ACHN (cell line): ENCODE measurements at regions of chr1 and their contacts with region 1.

Region 1: DNA sequence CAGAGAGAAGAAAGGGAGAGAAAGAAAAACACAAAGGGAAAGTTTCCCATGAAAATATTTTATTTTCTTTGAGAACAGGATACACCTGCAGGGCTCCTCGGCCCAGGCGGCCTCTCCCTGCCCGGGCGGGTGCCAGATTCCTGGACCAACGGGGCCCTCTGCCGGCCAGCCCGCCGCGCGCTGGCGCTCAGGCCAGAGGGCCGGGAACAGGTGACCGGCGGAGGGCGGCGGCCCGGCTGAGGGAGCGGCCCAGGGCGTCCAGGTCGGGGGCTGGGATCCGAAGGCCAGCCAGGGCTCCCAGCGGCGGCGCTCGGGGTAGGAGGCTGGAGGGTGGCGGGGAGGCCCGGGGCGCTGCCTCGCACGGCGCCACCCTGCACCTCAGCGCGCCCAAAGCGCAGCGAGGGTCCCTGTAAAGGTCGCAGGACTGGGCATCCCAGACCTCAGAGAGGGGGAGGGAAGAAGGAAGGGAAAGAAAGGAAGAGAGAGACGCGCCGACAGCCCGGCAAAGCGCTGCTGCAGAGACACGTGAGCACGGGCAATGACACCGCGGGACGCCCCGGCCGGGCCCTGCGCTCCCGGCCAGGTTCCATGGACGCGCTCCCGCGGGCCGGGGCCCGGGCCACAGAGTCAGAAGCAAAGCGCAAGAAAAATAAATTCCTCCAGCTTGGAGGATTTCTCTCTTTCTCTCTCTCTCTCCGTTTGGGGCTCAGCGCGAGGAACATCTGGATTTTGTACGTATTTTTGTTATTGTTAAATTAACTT is 927 bp downstream of the WNT9A start:
- DNase-seq: peak; percentile 81

Region 2: DNA sequence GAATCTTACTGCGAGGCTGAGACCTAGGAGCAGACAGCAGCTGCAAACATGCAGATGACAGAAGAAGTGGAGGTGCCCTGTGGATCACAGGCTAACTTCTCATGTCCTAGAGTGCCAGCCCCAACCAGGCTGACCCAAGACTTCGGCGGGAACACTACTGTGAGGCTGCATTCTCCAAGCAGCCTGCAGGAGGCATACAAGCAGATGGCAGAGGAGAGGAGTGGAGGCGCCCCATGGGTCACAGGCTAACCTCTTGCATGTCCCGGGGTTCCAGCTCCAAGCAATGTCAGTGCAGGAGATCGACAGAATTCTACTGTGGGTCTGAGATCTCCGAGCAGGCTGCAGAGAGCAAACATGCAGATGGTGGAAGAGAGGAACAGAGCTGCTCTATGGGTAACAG is 481.5 kb before region 1 on chr1:
- in situ Hi-C with region 1: loop called (anchors 25 kb)
- DNase-seq: no peak

Region 3: DNA sequence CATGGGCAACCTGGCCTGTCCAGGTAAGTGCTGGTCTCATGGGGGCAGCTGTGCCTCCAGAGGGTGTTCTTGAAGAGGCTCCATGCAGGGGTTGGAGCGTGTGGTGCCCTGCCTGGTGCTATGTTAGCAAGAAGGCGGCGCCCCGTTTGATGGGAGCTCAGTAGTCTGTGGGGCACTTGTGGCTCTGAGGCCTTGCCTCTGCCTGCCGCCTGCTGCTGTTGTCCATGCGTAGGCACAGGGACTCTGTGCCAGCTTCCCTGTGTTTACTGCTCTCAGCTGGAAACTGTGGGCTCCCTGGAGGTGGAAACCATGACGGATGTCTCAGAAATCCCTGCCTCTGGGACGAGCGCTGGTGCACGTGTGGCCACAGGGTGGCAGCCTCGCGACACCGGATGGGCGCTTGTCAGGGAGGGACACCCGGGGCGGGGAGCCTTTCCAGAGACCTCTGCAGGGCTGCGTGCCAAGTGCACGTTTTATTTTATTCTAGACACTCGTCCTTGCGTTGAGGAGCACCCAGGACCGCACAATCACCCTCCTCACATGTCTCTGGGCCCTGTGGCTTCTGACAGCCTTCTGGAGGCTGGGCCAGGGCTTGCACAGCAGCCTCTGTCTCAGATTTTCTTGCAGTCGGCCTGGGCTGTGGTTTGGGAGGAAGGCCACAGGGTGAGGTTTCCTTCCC is 184.4 kb before region 1 on chr1:
- in situ Hi-C with region 1: loop called (anchors 25 kb)
- DNase-seq: peak; percentile 76

Region 4: GRCh38 chr1:227999056-227999930 is 52.5 kb after region 1 on chr1:
- in situ Hi-C with region 1: no loop called
- DNase-seq: peak; percentile 84